Caco-2 (cell line): ENCODE measurements at regions of chr9 and their contacts with region 1.

Region 1: DNA sequence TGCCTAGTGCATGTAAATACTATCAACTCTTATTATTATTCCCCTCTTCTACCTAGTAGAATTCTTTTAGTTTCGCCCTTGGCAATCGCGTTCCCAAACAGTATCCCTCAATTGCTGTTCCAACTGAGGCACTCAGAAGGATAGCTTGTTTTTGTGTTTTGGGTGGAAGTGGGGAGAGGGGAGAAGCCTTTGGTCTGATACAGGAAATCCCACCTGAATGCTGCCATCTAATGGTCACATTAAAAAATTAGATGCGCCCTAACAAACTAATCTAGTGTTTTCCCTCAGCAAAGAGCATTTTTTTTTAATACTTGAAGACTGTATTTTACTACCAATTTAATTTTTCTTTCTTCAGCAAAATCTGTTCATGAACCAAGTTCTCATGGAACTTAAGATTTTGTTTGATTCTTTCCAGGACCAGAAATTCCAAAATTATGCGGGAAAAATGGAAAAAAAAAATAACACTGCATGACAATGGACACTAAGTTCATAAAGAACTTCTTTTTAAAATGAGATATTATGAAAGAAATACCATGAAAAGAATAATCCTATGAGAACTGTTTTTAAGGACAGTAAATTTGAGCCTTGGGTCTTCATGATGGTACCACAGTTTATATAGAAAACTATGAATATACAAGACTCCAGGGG is 22.2 kb upstream of the GLDC start:
- DNase-seq: peak in 1 of 2 experiments; percentile 35
- H3K4me3 ChIP-seq: no peak overlapping the region
- H3K4me3 Mint-ChIP-seq: no peak overlapping the region
- H3K27ac Mint-ChIP-seq: peak overlapping the region; percentile 56
- H3K4me1 ChIP-seq: peaks cover 35% of the 10 kb centered on the region
- H3K4me1 Mint-ChIP-seq: peaks cover 14% of the 10 kb centered on the region
- H3K27me3 ChIP-seq: no peaks in the 10 kb centered on the region
- H3K27me3 Mint-ChIP-seq: no peaks in the 10 kb centered on the region
- CTCF ChIP-seq: peak; percentile 39 to 50

Region 2: GRCh38 chr9:6584881-6585597 is 82.7 kb before region 1 on chr9:
- CTCF ChIA-PET with region 1: interaction called, 7 read pairs
- POLR2A ChIA-PET with region 1: no interaction called
- intact Hi-C with region 1: loop called (anchors 1 kb)
- DNase-seq: no peak
- H3K4me3 ChIP-seq: no peak overlapping the region
- H3K4me3 Mint-ChIP-seq: no peak overlapping the region
- H3K27ac Mint-ChIP-seq: no peak overlapping the region
- H3K4me1 ChIP-seq: peaks cover 13% of the 10 kb centered on the region
- H3K4me1 Mint-ChIP-seq: peaks cover 15% of the 10 kb centered on the region
- H3K27me3 ChIP-seq: no peaks in the 10 kb centered on the region
- H3K27me3 Mint-ChIP-seq: no peaks in the 10 kb centered on the region
- CTCF ChIP-seq: no peak

Region 3: GRCh38 chr9:6592231-6592630 is 75.5 kb before region 1 on chr9:
- CTCF ChIA-PET with region 1: interaction called, 7 read pairs
- POLR2A ChIA-PET with region 1: interaction called, 3 read pairs
- intact Hi-C with region 1: loop called (anchors 1 kb)
- DNase-seq: peak; percentile 78 to 86
- H3K4me3 ChIP-seq: no peak overlapping the region
- H3K4me3 Mint-ChIP-seq: peak overlapping the region; percentile 30
- H3K27ac Mint-ChIP-seq: peak overlapping the region; percentile 71
- H3K4me1 ChIP-seq: peaks cover 46% of the 10 kb centered on the region
- H3K4me1 Mint-ChIP-seq: peaks cover 58% of the 10 kb centered on the region
- H3K27me3 ChIP-seq: no peaks in the 10 kb centered on the region
- H3K27me3 Mint-ChIP-seq: no peaks in the 10 kb centered on the region
- CTCF ChIP-seq: no peak

Region 4: DNA sequence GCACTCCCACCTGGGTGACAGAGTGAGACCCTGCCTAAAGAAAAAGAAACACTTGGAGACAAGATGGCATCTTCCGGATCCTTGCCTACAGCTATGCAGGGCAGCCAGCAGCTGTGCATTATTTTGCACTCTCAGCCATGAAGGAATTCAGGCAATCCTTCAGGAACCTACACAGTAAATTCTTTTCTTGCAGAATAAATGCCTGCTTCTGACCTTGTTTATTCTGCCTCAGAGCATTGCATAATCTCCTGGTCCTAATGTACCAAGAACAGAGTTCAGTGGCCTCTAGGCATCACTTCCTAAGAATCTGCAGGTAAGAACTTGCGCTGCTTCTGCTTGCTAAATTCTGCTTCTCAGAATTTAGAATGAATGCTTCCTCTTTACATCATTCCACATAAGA is 39.1 kb before region 1 on chr9:
- CTCF ChIA-PET with region 1: no interaction called
- POLR2A ChIA-PET with region 1: interaction called, 4 read pairs
- intact Hi-C with region 1: loop called (anchors 2 kb)
- DNase-seq: peak; percentile 39 to 57
- H3K4me3 ChIP-seq: no peak overlapping the region
- H3K4me3 Mint-ChIP-seq: no peak overlapping the region
- H3K27ac Mint-ChIP-seq: peak overlapping the region; percentile 47
- H3K4me1 ChIP-seq: peaks cover 62% of the 10 kb centered on the region
- H3K4me1 Mint-ChIP-seq: peaks cover 44% of the 10 kb centered on the region
- H3K27me3 ChIP-seq: no peaks in the 10 kb centered on the region
- H3K27me3 Mint-ChIP-seq: no peaks in the 10 kb centered on the region
- CTCF ChIP-seq: no peak

Region 5: GRCh38 chr9:6645355-6646292 is 22.1 kb before region 1 on chr9 and contains the start of gene GLDC:
- CTCF ChIA-PET with region 1: interaction called, 3 read pairs
- POLR2A ChIA-PET with region 1: interaction called, 9 read pairs
- intact Hi-C with region 1: loop called (anchors 1 kb)
- DNase-seq: peak; percentile 91 to 94
- H3K4me3 ChIP-seq: peak within 1 kb of the TSS; percentile 70
- H3K4me3 Mint-ChIP-seq: peak within 1 kb of the TSS; percentile 92
- H3K27ac Mint-ChIP-seq: peak within 1 kb of the TSS; percentile 88
- H3K4me1 ChIP-seq: peaks cover 31% of the 10 kb centered on the region
- H3K4me1 Mint-ChIP-seq: peaks cover 28% of the 10 kb centered on the region
- H3K27me3 ChIP-seq: no peaks in the 10 kb centered on the region
- H3K27me3 Mint-ChIP-seq: no peaks in the 10 kb centered on the region
- CTCF ChIP-seq: no peak
- total RNA-seq, gene GLDC: 276 and 320 TPM in 2 replicates

Region 6: GRCh38 chr9:6681147-6681956 is 13.6 kb after region 1 on chr9:
- CTCF ChIA-PET with region 1: no interaction called
- POLR2A ChIA-PET with region 1: interaction called, 14 read pairs
- intact Hi-C with region 1: loop called (anchors 1 kb)
- DNase-seq: peak; percentile 96 to 97
- H3K4me3 ChIP-seq: peak overlapping the region; percentile 62
- H3K4me3 Mint-ChIP-seq: peak overlapping the region; percentile 77
- H3K27ac Mint-ChIP-seq: peak overlapping the region; percentile 99
- H3K4me1 ChIP-seq: peaks cover 15% of the 10 kb centered on the region
- H3K4me1 Mint-ChIP-seq: peaks cover 10% of the 10 kb centered on the region
- H3K27me3 ChIP-seq: no peaks in the 10 kb centered on the region
- H3K27me3 Mint-ChIP-seq: no peaks in the 10 kb centered on the region
- CTCF ChIP-seq: no peak

Region 7: GRCh38 chr9:6715755-6716643 is 48.2 kb after region 1 on chr9:
- CTCF ChIA-PET with region 1: interaction called, 4 read pairs
- POLR2A ChIA-PET with region 1: interaction called, 10 read pairs
- intact Hi-C with region 1: no loop called
- DNase-seq: peak; percentile 93 to 94
- H3K4me3 ChIP-seq: peak overlapping the region; percentile 60
- H3K4me3 Mint-ChIP-seq: peak overlapping the region; percentile 94
- H3K27ac Mint-ChIP-seq: peak overlapping the region; percentile 97
- H3K4me1 ChIP-seq: peaks cover 7% of the 10 kb centered on the region; the same call in 1 of the 2 replicates
- H3K4me1 Mint-ChIP-seq: peaks cover 11% of the 10 kb centered on the region
- H3K27me3 ChIP-seq: no peaks in the 10 kb centered on the region
- H3K27me3 Mint-ChIP-seq: no peaks in the 10 kb centered on the region
- CTCF ChIP-seq: no peak

Region 8: GRCh38 chr9:6764523-6764922 is 96.8 kb after region 1 on chr9:
- CTCF ChIA-PET with region 1: no interaction called
- POLR2A ChIA-PET with region 1: no interaction called
- intact Hi-C with region 1: no loop called
- DNase-seq: no peak
- H3K4me3 ChIP-seq: no peak overlapping the region
- H3K4me3 Mint-ChIP-seq: peak overlapping the region; percentile 59
- H3K27ac Mint-ChIP-seq: peak overlapping the region; percentile 77
- H3K4me1 ChIP-seq: peaks cover 46% of the 10 kb centered on the region
- H3K4me1 Mint-ChIP-seq: peaks cover 21% of the 10 kb centered on the region
- H3K27me3 ChIP-seq: no peaks in the 10 kb centered on the region
- H3K27me3 Mint-ChIP-seq: no peaks in the 10 kb centered on the region
- CTCF ChIP-seq: no peak

Region 9: GRCh38 chr9:6779417-6780241 is 111.9 kb after region 1 on chr9:
- CTCF ChIA-PET with region 1: no interaction called
- POLR2A ChIA-PET with region 1: no interaction called
- intact Hi-C with region 1: no loop called
- DNase-seq: peak in 1 of 2 experiments; percentile 40
- H3K4me3 ChIP-seq: no peak overlapping the region
- H3K4me3 Mint-ChIP-seq: no peak overlapping the region
- H3K27ac Mint-ChIP-seq: peak overlapping the region; percentile 51
- H3K4me1 ChIP-seq: peaks cover 59% of the 10 kb centered on the region
- H3K4me1 Mint-ChIP-seq: peaks cover 16% of the 10 kb centered on the region
- H3K27me3 ChIP-seq: no peaks in the 10 kb centered on the region
- H3K27me3 Mint-ChIP-seq: no peaks in the 10 kb centered on the region
- CTCF ChIP-seq: no peak